Activated naive CD4-positive, alpha-beta T cell treated with anti-CD3 and anti-CD28 coated beads, Interleukin-2, amount 10 ng/mL, durations not matched to agents 7 days and 5 days (primary cell): ENCODE measurements at regions of chr11 and their contacts with region 1.

Region 1: DNA sequence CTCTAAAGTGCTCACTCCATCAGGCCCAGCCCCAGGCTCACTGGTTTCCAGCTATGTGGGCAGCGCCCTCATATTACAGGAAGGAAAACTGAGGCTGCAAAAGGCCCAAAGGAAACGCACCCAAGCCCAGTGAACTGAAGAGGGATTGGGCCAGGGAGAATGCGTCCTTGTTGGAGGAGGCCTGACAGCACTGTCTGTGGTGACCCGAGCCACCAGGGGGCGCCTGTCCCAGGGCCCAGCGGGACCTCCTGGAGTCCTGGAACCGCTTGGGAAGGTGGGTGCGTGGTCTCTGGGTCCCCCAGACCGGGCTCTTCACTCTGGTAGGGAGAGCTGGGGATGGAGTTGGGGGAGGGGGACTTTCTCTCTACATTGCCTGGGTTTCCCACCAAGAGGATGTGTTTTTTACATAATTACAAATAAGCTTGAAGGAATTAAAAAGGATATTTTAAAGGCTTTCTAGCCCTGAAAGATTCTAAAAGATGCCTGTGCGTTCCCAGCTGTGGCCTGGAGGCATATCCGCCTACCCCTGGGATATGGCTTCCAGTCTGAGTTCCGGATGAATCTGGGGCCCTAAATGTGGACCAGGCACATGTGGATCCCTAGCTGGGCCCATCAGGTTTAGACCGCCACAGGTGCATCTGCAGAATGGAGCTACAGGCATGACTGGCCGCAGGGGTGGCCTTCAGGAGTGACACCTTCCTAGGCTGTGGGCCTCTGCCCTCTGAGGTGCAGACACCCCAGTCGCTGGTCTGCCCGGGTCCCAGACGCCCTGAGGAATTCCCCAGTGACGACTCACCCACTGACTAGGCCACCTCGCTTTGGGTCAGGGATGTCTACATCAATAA is 4.2 kb downstream of the SPI1 start:
- DNase-seq: peak; percentile 88
- H3K4me3 Mint-ChIP-seq: no peak overlapping the region
- H3K27ac Mint-ChIP-seq: no peak overlapping the region
- H3K4me1 Mint-ChIP-seq: peaks cover 2% of the 10 kb centered on the region
- H3K27me3 Mint-ChIP-seq: peaks cover 4% of the 10 kb centered on the region

Region 2: GRCh38 chr11:47387911-47388678 is 14.0 kb after region 1 on chr11:
- CTCF ChIA-PET with region 1: interaction called, 31 read pairs
- DNase-seq: no peak
- H3K4me3 Mint-ChIP-seq: no peak overlapping the region
- H3K27ac Mint-ChIP-seq: no peak overlapping the region
- H3K4me1 Mint-ChIP-seq: peaks cover 29% of the 10 kb centered on the region
- H3K27me3 Mint-ChIP-seq: peaks cover 11% of the 10 kb centered on the region

Region 3: GRCh38 chr11:47399860-47400767 is 26.0 kb after region 1 on chr11:
- CTCF ChIA-PET with region 1: interaction called, 14 read pairs
- DNase-seq: peak; percentile 57
- H3K4me3 Mint-ChIP-seq: peak overlapping the region; percentile 79
- H3K27ac Mint-ChIP-seq: peak overlapping the region; percentile 64
- H3K4me1 Mint-ChIP-seq: peaks cover 36% of the 10 kb centered on the region
- H3K27me3 Mint-ChIP-seq: peaks cover 8% of the 10 kb centered on the region

Region 4: DNA sequence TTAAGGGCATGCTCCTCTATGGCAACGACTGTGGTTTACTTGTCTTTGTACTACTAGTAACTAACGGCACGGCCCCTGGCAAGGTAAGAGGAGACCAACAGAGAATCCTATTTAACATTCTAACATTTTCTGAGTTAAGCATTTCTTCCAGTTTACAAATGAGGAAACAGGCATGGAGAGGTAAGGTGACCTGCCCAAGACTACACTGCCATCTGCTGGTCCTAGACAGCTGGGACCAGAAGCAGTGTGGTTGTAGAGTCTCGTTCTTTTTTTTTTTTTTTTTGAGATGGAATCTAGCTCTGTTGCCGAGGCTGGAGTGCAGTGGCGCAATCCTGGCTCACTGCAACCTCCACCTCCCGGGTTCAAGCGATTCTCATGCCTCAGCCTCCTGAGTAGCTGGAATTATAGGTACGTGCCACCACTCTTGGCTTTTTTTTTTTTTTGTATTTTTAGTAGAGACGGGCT is 80.1 kb after region 1 on chr11:
- CTCF ChIA-PET with region 1: interaction called, 20 read pairs
- DNase-seq: peak; percentile 83
- H3K4me3 Mint-ChIP-seq: no peak overlapping the region
- H3K27ac Mint-ChIP-seq: no peak overlapping the region
- H3K4me1 Mint-ChIP-seq: peaks cover 3% of the 10 kb centered on the region
- H3K27me3 Mint-ChIP-seq: no peaks in the 10 kb centered on the region